Activated CD8-positive, alpha-beta T cell treated with anti-CD3 and anti-CD28 coated beads for 36 hours (primary cell): ENCODE measurements at regions of chr19 and their contacts with region 1.

Region 1: DNA sequence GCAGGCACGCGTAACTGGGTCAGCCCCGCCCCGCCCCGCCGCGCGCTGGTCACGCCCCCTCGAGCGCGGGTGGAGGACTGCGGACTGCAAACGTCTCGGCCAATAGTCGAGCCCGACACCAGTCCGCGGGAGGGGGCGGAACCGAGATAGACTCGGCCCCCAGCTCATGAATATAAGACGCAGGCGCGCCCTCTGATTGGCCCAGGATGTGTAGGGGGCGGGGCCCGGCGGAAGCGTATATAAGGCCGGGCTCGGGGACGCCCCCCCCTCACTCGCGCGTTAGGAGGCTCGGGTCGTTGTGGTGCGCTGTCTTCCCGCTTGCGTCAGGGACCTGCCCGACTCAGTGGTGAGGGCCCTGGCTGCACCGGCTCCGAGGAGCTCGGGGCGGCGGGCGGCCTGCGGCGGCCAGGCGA is at the start of gene CIRBP:
- DNase-seq: peak; percentile 100
- ATAC-seq: peak; percentile 86
- H3K4me3 Mint-ChIP-seq: peak within 1 kb of the TSS; percentile 94
- H3K27ac Mint-ChIP-seq: peak within 1 kb of the TSS; percentile 95
- H3K4me1 Mint-ChIP-seq: peaks cover 71% of the 10 kb centered on the region
- H3K27me3 Mint-ChIP-seq: no peaks in the 10 kb centered on the region
- CTCF ChIP-seq: no peak
- total RNA-seq, gene CIRBP: 161 to 180 TPM

Region 2: DNA sequence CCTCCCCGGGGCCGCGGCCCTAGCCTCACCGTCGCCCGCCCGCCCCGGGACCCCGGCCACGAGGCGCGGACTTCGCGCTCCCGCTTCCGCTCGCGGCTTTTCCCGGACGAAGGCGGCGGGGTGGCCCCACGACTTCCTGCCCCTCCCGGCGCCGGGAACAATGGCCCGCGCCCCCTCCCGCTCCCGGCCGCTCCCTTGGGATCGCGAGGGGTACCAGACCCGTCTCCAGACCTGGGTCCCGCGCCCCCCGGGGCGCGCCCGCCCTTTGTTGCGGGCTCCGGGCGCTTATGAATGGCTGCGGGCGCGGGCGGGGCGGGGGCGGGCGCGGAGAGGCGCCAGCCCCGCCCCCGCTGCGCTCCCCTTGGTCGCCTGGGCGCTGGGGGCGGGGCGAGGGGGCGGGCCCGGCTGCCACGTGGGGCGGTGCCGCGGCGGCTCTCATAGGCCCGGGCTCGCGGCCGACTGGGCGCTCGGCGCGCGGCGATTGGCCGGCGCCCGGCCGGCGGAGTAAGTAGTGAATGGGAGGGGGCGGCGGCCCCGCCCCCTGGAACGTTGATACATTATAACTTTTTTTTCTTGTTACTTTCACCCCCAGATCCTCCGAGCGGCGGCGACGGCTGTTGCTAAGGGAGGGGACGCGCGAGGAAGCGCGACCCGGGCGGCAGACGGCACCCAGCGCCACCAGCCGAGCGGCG is 19.6 kb before region 1 on chr19:
- CTCF ChIA-PET with region 1: interaction called, 449 read pairs
- POLR2A ChIA-PET with region 1: interaction called, 88 read pairs
- intact Hi-C with region 1: loop called (anchors 2 kb)
- DNase-seq: peak; percentile 95
- ATAC-seq: peak; percentile 40
- H3K4me3 Mint-ChIP-seq: peak overlapping the region; percentile 73
- H3K27ac Mint-ChIP-seq: peak overlapping the region; percentile 75
- H3K4me1 Mint-ChIP-seq: peaks cover 10% of the 10 kb centered on the region
- H3K27me3 Mint-ChIP-seq: no peaks in the 10 kb centered on the region
- CTCF ChIP-seq: no peak

Region 3: DNA sequence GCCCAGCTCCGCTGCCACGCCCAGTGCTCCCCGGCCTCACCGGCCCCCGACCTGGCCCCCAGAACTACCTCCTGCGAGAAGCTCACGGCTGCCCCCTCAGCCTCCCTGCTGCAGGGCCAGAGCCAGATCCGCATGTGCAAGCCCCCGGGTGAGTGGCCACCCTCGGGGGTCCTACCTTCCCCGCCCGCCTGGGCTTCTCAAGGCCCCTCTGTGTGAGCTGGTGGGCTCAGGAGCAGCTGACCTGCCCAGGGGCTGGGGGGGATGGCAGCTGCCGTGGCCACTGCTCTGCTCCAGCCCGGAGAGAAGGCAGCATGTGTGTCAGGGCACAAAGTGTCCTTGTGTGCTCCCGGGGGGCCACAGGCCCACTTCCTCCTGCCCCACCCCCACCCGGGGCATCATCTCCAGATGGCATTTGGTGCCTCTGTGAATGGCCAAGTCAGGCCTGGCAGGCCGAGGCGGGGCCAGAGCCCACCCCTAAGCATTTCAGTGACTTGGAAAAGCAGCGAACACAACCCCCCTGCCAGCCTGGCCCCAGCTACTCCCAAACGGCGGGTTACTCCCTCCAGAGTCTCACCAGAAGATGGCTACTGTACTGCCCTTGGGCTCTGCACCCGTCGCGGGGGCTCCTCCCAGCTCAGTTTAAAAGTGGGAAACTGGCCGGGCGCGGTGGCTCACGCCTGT is 13.4 kb before region 1 on chr19:
- CTCF ChIA-PET with region 1: interaction called, 30 read pairs
- POLR2A ChIA-PET with region 1: interaction called, 30 read pairs
- intact Hi-C with region 1: loop called (anchors 2 kb)
- DNase-seq: no peak
- ATAC-seq: no peak
- H3K4me3 Mint-ChIP-seq: no peak overlapping the region
- H3K27ac Mint-ChIP-seq: no peak overlapping the region
- H3K4me1 Mint-ChIP-seq: peaks cover 39% of the 10 kb centered on the region
- H3K27me3 Mint-ChIP-seq: no peaks in the 10 kb centered on the region
- CTCF ChIP-seq: no peak

Region 4: DNA sequence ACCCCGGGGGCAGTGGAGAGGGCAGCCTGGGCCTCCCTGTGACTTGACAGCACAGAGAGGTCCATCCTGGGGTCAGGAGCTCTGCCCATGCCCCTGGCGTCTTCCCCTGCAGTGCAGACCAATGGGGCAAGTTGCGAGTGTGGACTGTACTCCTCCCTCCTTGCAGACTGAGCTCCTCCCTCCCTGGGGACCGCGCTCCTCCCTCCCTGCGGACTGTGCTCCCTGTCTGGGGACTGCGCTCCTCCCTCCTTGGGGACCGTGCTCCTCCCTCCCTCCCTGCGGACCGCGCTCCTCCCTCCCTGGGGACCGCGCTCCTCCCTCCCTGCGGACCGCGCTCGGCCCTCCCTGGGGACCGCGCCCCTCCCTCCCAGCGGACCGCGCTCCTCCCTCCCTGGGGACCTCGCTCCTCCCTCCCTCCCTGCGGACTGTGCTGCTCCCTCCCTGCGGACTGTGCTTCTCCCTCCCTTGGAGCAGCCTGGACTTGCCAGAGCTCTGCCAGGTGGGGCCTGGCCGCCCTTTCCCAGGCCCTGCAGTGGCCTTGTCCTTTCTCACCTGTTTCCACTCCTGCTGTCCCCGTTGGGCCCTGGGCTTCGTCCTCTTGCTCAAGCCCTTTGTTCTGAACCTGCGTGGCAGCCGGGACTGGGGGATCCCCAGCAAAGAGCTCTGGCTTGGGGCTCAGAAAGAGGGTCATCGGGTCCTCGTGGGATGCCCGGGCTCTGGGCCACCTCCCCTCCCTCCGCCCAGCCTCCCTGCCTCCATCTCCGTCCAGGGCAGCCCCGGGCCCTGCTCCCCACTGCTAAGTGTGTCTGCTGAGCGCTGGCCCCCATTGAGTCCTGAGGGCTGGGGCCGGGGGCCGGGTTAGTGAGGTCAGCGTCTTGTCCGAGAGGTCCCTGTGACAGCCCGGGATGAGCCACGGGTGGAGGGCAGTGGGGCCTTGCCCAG is 125.5 kb after region 1 on chr19:
- CTCF ChIA-PET with region 1: no interaction called
- POLR2A ChIA-PET with region 1: no interaction called
- intact Hi-C with region 1: no loop called
- DNase-seq: no peak
- ATAC-seq: no peak
- H3K4me3 Mint-ChIP-seq: no peak overlapping the region
- H3K27ac Mint-ChIP-seq: no peak overlapping the region
- H3K4me1 Mint-ChIP-seq: peaks cover 9% of the 10 kb centered on the region
- H3K27me3 Mint-ChIP-seq: no peaks in the 10 kb centered on the region
- CTCF ChIP-seq: no peak